A549 (cell line): ENCODE measurements at regions of chr13 and their contacts with region 1.

Region 1: GRCh38 chr13:44458313-44458975 is 84.8 kb downstream of the SERP2 start:
- DNase-seq: no peak
- ATAC-seq: no peak
- H3K4me3 ChIP-seq: no peak overlapping the region
- H3K27ac ChIP-seq: no peak overlapping the region
- H3K4me1 ChIP-seq: 0 out of 3 replicates have a peak, but pooled peaks cover 4% of the 10 kb centered on the region
- CTCF ChIP-seq: no peak
- EP300 ChIP-seq: no peak
- POLR2A ChIP-seq: no peak
- RAD21 ChIP-seq: no peak

Region 2: GRCh38 chr13:44470638-44471562 is 12.5 kb after region 1 on chr13:
- CTCF ChIA-PET with region 1: interaction called, 17 read pairs
- POLR2A ChIA-PET with region 1: no interaction called
- DNase-seq: peak in 1 of 2 experiments; percentile 36
- ATAC-seq: no peak
- H3K4me3 ChIP-seq: no peak overlapping the region
- H3K27ac ChIP-seq: peak overlapping the region in 1 of 2 experiments; percentile 52; a peak in 2 of 6 replicates
- H3K4me1 ChIP-seq: peaks cover 40% of the 10 kb centered on the region
- CTCF ChIP-seq: peak; percentile 55
- EP300 ChIP-seq: no peak
- POLR2A ChIP-seq: no peak
- RAD21 ChIP-seq: peak; percentile 61 to 69

Region 3: DNA sequence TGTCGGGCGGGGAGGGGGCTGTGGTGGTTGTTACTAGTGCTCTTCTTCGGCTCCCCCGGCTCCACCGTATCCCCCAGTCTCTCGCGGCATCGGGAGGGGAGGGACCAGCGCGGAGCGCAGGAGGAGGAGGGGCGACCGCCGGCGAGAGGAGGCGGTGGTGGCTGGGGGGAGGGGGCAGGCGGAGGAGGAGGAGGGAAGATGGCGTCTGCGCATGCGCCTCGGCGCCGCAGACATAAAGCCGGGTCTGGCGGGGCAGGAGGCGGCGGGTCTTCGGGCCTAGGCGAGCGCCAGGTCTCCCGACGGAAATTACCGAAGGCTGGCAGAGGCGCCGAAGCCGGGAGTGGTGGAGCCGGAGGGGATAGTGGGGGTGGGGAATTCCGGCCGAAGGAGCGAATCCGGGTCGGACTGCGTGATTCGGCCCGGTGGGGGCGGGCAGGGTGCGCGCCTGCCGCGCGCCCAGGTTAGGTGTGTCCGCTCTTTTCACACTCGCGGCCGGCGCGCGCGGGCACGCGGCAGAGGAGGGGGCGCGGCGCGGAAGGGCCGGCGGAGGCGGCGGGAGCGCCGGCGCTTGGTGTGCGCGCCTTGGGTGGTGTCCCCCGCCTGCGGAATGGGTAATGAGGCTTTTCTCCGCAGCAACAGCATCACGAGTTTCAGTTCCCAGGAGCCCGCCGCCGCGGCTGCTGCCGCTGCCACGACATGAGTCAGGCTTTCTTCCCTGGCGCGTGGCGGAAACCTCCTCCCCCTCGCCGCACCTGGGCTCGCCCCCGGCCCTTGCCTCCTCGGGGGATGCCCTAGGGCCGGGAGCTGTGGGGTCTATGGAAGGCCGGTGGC is 119.0 kb after region 1 on chr13:
- CTCF ChIA-PET with region 1: no interaction called
- POLR2A ChIA-PET with region 1: no interaction called
- DNase-seq: peak; percentile 64 to 95
- ATAC-seq: peak; percentile 74 to 86
- H3K4me3 ChIP-seq: peak overlapping the region; percentile 96
- H3K27ac ChIP-seq: peak overlapping the region; percentile 99 to 100
- H3K4me1 ChIP-seq: peaks cover 38% of the 10 kb centered on the region
- CTCF ChIP-seq: no peak
- EP300 ChIP-seq: no peak
- POLR2A ChIP-seq: peak; percentile 63
- RAD21 ChIP-seq: no peak; a peak in 1 of 5 replicates